SK-N-SH (cell line): ENCODE measurements at regions of chr4 and their contacts with region 1.

Region 1: DNA sequence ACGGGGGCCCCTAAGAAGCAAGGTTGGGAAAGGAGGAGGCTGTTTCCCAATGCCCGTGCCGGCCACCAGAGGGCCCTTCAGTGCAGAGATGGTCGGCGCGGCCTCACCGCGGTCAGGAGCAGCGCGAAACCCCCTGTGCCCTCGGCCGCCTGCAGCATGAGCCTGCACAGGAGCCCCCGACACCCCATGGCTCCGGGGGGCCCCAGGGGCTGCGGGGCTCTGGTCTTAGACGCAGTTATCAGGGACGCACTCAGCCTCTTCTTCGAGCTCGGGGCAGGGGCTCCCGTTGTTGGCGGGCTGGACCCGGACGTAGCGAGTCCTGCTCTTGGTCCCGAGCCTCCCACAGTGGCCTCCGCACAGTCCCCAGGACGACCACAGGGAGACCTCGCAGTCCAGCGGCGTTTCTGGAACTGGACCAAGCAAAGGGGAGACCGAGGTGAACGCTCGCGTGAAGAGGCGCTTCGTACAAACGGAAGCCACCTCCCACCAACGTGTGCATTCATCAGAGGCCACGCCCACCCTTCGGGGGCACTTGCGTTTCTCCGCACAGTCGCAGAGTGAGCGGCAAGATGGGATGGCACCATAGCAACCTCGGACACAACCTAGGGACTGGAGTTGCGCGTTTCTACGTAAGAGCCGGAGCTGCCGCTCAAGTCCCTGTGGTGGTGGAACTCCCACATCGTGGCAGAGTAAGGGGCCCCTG is 5.0 kb downstream of the SPON2 start:
- DNase-seq: peak; percentile 86
- H3K4me3 ChIP-seq: peak overlapping the region; percentile 50 to 54
- H3K27ac ChIP-seq: no peak overlapping the region; a peak in 1 of 4 replicates
- H3K4me1 ChIP-seq: peaks cover 0 to 6% of the 10 kb centered on the region in 2 experiments; a peak in 1 of 4 replicates
- H3K27me3 ChIP-seq: peaks cover 19% of the 10 kb centered on the region
- CTCF ChIP-seq: peak; percentile 77
- EP300 ChIP-seq: no peak
- RAD21 ChIP-seq: peak; percentile 71

Region 2: DNA sequence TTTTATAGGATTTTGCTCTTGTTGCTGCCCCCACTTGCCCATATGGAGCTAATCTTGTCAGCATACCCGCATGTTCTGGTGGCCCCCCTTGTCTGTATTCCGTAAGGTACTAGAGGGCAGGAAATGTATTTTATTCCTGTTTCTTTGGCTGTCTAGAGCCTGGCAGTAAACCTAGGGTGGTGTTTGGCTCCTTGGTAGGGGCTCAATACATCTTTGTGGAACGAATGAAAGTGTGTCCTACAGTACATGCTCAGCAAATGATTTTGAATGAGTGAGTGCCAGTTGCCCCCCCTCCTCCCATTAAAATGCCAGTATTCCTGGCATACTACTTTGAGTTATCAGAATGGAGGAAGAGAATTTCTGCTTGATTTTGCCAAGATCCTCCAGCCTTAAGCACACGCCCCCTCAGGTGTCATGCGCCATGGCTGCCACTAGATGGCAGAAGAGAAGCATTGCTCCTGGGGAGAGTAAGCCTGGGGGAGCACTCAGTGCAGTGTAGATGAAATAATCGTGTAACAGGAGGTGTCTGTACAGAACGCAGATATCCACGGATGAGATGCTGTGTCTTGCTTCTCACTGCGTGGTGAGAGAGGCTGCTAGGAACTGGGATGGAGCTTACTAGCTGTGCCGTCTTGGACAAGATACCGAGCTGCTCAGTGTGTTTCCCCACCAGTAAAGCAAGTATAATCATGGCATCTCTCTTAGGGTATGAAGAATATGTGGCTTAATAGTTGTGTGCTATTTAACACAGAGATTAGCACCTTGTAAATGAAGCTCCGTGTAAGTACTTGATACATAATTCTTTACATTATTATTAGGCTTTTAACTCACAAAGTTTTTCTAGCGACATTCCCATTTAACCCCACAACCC is 36.8 kb before region 1 on chr4:
- CTCF ChIA-PET with region 1: interaction called, 18 read pairs
- POLR2A ChIA-PET with region 1: no interaction called
- DNase-seq: peak; percentile 79
- H3K4me3 ChIP-seq: peak overlapping the region in 1 of 2 experiments; percentile 40; a peak in 1 of 4 replicates
- H3K27ac ChIP-seq: no peak overlapping the region
- H3K4me1 ChIP-seq: peaks cover 0 to 3% of the 10 kb centered on the region in 2 experiments; a peak in 1 of 4 replicates
- H3K27me3 ChIP-seq: peaks cover 7% of the 10 kb centered on the region; the same call in 1 of the 2 replicates
- CTCF ChIP-seq: peak; percentile 99
- EP300 ChIP-seq: no peak
- RAD21 ChIP-seq: peak; percentile 95

Region 3: GRCh38 chr4:1151541-1151940 is 15.9 kb before region 1 on chr4:
- CTCF ChIA-PET with region 1: interaction called, 18 read pairs
- POLR2A ChIA-PET with region 1: no interaction called
- DNase-seq: no peak
- H3K4me3 ChIP-seq: no peak overlapping the region
- H3K27ac ChIP-seq: no peak overlapping the region
- H3K4me1 ChIP-seq: no peaks in the 10 kb centered on the region; a peak in 1 of 4 replicates
- H3K27me3 ChIP-seq: peaks cover 5% of the 10 kb centered on the region; the same call in 1 of the 2 replicates
- CTCF ChIP-seq: no peak
- EP300 ChIP-seq: no peak
- RAD21 ChIP-seq: no peak

Region 4: DNA sequence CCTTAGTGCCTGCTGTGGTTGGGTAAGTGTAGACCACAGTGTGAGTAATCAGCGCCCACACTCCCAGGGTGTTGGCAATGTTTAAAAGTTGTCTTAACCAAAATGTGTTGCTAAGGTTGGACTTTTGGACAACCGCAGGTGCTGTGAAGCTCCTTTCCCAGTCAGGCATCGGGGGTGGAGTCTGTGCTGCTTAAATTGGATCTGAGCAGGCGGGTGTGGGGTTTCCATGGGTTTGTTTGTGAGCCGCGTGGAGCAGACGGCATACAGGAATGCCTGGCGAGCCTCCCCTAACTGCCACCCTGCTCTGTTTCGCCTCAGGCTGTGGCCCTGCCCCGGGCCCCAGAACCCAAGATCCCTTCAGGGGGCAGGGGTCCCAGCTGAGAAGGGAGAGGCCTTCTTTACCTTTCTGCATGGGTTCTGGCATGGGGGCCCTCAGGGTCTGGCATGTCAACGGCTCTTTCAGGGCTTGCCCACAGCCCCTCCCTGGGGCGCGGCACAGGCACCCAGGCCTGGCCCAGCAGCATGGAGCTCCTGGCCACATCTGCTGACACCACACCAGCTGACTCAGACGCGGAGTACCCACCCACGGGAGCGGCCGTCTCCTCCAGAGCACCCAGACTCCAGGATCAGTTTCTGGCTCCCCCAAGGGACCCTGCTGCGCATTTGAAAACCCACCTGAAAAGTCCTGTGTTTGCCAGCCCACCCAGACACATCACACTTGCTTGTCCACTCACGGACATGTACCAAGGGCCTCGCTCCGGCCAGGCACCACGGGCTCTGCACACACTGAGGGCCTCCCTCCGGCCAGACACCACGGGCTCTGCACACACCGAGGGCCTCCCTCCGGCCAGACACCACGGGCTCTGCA is 10.1 kb after region 1 on chr4:
- CTCF ChIA-PET with region 1: interaction called, 23 read pairs
- POLR2A ChIA-PET with region 1: no interaction called
- DNase-seq: no peak
- H3K4me3 ChIP-seq: no peak overlapping the region
- H3K27ac ChIP-seq: no peak overlapping the region
- H3K4me1 ChIP-seq: no peaks in the 10 kb centered on the region; a peak in 1 of 4 replicates
- H3K27me3 ChIP-seq: no peaks in the 10 kb centered on the region; the same call in 1 of the 2 replicates
- CTCF ChIP-seq: no peak
- EP300 ChIP-seq: no peak
- RAD21 ChIP-seq: no peak

Region 5: DNA sequence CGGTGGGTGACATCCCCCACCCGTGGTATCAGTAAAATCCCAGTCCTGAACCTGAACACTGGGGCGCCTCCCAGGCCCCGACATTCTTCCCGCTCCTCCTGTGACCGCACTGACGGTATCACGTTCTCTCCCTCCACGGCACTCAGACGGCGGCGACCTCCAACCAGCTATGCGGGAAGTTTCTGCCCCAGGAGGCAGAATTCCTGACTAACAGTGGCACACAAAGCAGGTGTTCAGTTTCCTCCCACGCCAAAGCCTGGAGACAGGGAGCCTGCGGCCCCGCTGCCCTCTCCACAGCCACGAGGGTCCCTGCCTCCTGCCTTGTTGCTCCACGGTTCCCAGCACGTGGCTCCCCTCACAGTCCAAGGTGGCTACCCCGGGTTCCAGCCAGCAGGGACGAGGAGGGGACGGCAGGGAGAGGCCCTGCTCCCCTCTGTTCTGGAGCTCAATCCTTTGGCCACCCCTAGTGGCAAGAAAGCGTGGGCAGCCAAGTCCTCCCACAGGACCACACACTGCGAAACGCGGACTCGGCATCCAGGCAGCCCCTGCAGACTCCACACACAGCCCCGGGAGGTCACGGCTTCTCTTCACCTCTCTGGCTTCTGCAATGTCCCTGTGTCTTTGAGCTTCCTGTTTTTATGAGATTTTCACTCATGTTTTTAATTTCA is 66.4 kb after region 1 on chr4:
- CTCF ChIA-PET with region 1: interaction called, 33 read pairs
- POLR2A ChIA-PET with region 1: no interaction called
- DNase-seq: peak; percentile 81
- H3K4me3 ChIP-seq: no peak overlapping the region
- H3K27ac ChIP-seq: peak overlapping the region in 1 of 2 experiments; percentile 66; a peak in 2 of 4 replicates
- H3K4me1 ChIP-seq: peaks cover 0 to 30% of the 10 kb centered on the region in 2 experiments; a peak in 1 of 4 replicates
- H3K27me3 ChIP-seq: no peaks in the 10 kb centered on the region
- CTCF ChIP-seq: peak; percentile 16; the same call in 1 of the 2 replicates
- EP300 ChIP-seq: no peak
- RAD21 ChIP-seq: peak; percentile 57

Region 6: DNA sequence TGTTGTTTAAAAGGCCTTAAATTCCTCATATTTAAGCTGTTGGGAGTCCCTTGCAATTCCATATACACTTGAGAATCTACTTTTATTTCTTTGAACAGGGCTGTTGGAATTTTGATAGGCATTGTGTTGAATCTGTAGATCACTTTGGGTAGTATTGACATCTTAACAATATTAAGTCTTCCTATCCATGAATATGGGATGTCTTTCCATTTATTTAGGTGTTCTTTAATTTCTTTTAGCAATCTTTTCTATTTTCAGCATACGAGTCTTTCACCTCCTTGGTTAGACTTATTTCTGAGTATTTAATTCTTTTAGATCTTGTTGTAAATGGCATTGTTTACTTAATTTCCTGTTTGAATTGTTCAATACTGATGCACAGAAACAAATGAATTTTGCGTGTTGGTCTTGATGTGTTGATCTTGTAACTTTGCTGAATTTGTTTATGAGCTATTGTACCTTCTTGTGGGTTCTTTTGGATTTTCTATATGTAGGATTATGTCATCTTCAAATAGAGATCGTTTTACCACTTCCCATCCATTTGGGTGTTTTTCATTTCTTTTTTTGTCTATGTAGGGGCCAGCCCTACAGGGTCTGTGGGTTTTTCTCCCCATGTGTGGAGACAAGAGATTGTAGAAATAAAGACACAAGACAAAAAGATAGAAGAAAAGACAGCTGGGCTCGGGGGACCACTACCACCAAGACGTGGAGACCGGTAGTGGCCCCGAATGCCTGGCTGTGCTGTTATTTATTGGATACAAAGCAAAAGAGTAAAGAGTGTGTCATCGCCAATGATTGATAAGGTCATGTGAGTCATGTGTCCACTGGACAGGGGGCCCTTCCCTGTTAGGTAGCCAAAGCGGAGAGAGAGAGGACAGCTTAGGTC is 99.7 kb after region 1 on chr4:
- CTCF ChIA-PET with region 1: interaction called, 27 read pairs
- POLR2A ChIA-PET with region 1: no interaction called
- DNase-seq: no peak
- H3K4me3 ChIP-seq: no peak overlapping the region
- H3K27ac ChIP-seq: no peak overlapping the region
- H3K4me1 ChIP-seq: no peaks in the 10 kb centered on the region
- H3K27me3 ChIP-seq: no peaks in the 10 kb centered on the region
- CTCF ChIP-seq: no peak
- EP300 ChIP-seq: no peak
- RAD21 ChIP-seq: no peak

Region 7: GRCh38 chr4:1712216-1713002 is 545.0 kb after region 1 on chr4 and contains the start of gene SLBP:
- CTCF ChIA-PET with region 1: no interaction called
- POLR2A ChIA-PET with region 1: no interaction called
- DNase-seq: peak; percentile 97
- H3K4me3 ChIP-seq: peak within 1 kb of the TSS; percentile 77 to 97
- H3K27ac ChIP-seq: peak within 1 kb of the TSS; percentile 90 to 97
- H3K4me1 ChIP-seq: peaks cover 14 to 23% of the 10 kb centered on the region in 2 experiments; a peak in 2 of 4 replicates
- H3K27me3 ChIP-seq: no peaks in the 10 kb centered on the region
- CTCF ChIP-seq: no peak
- EP300 ChIP-seq: peak in 1 of 2 experiments; percentile 38; a peak in 1 of 4 replicates
- RAD21 ChIP-seq: no peak
- polyA plus RNA-seq, gene SLBP: 51.5 and 64.3 TPM in 2 replicates